Ascending aorta (tissue), 2 donors: ENCODE measurements at regions of chr22 and their contacts with region 1.

Region 1: DNA sequence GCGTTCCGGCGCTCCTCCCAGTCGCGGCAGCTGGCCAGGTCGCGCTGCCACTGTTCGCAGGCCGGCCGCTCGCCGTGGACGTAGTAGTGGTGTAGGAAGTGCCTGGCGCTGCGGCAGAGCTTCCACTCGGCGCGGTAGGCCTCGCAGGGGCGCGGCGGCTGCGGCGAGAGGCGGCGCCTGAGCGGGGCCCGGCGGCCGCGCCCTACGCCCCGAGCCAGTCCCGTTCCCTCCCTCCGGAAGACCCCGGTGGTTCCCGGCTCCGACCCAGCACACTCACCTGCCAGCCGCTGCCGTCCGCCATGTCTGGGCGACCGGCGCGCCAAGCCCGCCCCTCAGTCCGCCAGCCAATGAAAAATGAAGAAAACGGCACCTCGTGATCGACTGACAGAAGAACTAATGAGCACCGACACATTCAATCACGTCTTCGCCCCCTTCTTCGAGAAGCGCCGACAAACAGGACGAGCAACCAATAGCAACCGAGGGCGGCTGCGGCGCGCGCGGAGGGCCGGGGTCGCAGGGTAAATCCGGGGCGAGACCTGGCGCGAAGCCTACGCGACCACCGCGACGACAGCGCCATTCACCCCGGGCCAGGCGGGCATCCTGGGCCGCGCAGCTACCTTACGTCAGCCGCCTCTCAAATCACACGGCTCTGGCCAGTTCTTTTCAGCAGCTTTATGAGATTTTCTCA is at the start of gene C22orf39:
- DNase-seq: peak; percentile 75 to 93
- H3K4me3 ChIP-seq: peak within 1 kb of the TSS; percentile 80 to 91
- H3K27ac ChIP-seq: peak within 1 kb of the TSS; percentile 86 to 89
- H3K4me1 ChIP-seq: peaks cover 3 to 18% of the 10 kb centered on the region in 2 donors
- H3K27me3 ChIP-seq: no peaks in the 10 kb centered on the region
- CTCF ChIP-seq: no peak
- total RNA-seq, gene C22orf39: 58.5 TPM

Region 2: GRCh38 chr22:19432133-19432851 is 15.2 kb before region 1 on chr22 and contains the start of gene MRPL40:
- intact Hi-C with region 1: loop called (anchors 1 kb)
- DNase-seq: peak; percentile 56 to 94
- H3K4me3 ChIP-seq: peak within 1 kb of the TSS; percentile 66 to 99
- H3K27ac ChIP-seq: peak within 1 kb of the TSS; percentile 95 to 98
- H3K4me1 ChIP-seq: peaks cover 0 to 22% of the 10 kb centered on the region in 2 donors
- H3K27me3 ChIP-seq: no peaks in the 10 kb centered on the region
- CTCF ChIP-seq: no peak
- total RNA-seq, gene MRPL40: 14.7 TPM

Region 3: DNA sequence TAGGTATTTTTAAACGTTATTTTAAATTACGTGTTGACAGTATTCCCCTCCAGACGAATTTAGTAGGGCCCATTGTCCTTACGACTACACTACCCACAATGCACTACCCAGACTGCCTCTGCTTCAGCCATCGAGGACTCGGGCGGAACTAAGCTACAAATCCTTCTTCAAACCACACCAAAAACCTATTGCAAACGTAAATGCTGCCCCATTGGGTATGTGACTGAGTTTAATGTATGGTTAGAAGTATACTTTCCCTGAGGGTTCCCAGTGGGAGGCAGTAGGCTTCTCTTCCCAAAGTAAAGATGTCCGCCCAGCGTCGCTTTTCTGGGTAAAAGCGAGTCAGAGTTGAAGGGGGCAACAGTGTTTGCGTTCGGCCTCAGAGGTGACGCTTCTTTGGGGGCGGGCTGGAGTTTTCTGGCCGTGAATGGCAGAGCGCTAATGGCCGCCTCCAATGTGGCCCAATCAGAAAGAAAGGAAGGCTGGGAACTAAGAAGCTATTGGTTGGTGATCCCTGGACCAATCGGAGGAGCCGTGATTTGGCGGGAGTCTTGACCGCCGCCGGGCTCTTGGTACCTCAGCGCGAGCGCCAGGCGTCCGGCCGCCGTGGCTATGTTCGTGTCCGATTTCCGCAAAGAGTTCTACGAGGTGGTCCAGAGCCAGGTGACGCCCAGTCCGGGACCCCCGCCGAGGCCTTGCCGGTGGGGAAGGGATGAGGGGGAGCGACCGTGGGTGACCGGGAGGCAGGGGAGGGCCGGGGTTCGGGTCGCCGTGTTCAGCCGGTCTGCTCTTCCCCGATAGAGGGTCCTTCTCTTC is 32.0 kb after region 1 on chr22 and contains the start of gene CDC45:
- intact Hi-C with region 1: loop called (anchors 1 kb)
- DNase-seq: peak; percentile 90 to 98
- H3K4me3 ChIP-seq: peak within 1 kb of the TSS; percentile 84 to 85
- H3K27ac ChIP-seq: peak within 1 kb of the TSS; percentile 87 to 98
- H3K4me1 ChIP-seq: peaks cover 3 to 11% of the 10 kb centered on the region in 2 donors
- H3K27me3 ChIP-seq: no peaks in the 10 kb centered on the region
- CTCF ChIP-seq: no peak
- total RNA-seq, gene CDC45: not detected

Region 4: DNA sequence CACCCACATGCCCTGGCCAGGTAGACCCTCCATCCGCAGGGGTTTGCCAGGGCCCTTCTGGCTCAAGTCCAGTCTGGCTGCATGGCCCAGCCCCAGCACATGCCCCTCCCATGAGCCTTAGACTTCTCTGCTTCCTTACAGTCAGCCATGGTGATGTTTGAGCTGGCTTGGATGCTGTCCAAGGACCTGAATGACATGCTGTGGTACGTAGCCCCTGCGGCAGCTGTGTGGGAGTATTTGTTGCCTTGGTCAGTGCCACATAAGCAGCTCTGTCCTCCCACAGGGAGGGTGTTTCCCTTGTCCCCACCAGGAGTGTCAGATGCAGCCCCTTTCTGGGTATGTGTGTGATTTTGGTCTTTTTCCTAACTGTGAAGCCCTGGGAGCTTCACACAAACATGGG is 49.7 kb after region 1 on chr22:
- intact Hi-C with region 1: no loop called
- DNase-seq: peak in 1 of 2 donors; percentile 50
- H3K4me3 ChIP-seq: no peak overlapping the region
- H3K27ac ChIP-seq: no peak overlapping the region
- H3K4me1 ChIP-seq: no peaks in the 10 kb centered on the region
- H3K27me3 ChIP-seq: no peaks in the 10 kb centered on the region
- CTCF ChIP-seq: no peak

Region 5: DNA sequence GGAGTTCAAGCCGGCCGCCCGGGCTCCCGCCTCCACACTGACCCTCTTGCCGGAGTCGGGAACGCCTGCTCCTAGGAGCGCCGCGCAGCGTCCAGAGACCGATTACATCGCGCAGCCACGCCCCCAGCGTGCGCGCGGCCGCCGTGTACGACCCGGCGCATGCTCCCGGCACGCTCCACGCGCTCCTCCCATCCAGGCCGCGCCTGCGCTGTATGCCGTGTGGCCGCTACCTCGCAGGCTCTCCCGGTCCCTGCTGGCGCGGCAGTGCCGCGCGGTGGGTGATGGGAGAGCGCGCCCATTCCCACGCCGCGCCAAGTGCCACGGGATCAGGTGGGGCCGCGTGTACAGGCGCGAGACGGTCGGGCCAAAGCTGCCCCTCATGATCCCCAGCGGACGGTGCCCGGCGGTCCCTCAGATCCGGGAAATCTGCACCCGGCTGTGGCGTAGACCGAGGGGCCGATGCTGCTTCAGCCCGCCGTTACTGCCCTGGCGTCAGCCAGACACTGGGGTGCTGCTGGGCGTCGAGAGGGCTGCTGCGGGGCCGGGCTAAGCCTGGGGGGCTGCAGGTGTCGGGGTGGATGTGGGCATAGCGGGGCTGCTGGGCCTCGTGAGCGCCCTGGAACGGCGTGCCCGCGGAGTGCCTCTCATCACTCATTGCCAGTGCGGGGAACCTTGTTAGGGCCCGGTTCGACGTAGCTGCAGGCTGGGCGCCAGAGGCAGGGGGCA is 407.4 kb after region 1 on chr22 and contains the starts of genes GNB1L and RTL10:
- intact Hi-C with region 1: loop called (anchors 10 kb)
- DNase-seq: peak; percentile 82 to 98
- H3K4me3 ChIP-seq: peak within 1 kb of the TSS; percentile 72 to 73
- H3K27ac ChIP-seq: peak within 1 kb of the TSS; percentile 91 to 94
- H3K4me1 ChIP-seq: peaks cover 14% of the 10 kb centered on the region in 2 donors
- H3K27me3 ChIP-seq: no peaks in the 10 kb centered on the region
- CTCF ChIP-seq: peak in 2 of 3 experiments; percentile 13 to 20
- total RNA-seq, gene GNB1L: 7.9 TPM
- total RNA-seq, gene RTL10: 8.8 TPM